ENCODE measurements at regions of chr12 and their contacts with region 1.

Region 1: GRCh38 chr12:114668151-114668885 is 15.7 kb downstream of the TBX3 start:
- DNase-seq: peak; percentile 66 to 94
- H3K4me3 ChIP-seq: no peak overlapping the region
- CTCF ChIP-seq: peak in 1 of 3 donors; percentile 38
- POLR2A ChIP-seq: no peak

Region 2: DNA sequence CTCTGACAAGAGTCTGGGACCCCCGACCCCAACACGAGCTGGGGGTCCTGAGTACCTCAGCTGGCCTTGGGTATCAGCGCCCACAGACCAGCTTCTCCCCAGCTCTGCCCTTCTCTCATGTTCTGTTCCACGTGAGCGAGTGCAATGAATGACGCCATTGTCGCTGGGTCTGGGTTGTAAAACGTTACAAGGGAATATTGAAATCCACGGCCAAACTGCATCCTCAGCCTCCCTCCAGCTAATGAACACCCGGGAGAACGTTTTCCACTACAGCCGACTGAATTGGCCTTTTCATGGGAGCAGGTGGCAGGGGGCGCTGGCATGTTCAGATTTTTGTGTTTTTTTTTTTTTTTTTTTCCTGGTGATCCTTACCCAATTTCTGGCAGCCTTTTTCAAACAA is 297.1 kb before region 1 on chr12:
- intact Hi-C with region 1: no loop called
- DNase-seq: no peak
- H3K4me3 ChIP-seq: no peak overlapping the region
- CTCF ChIP-seq: no peak
- POLR2A ChIP-seq: no peak

Region 3: DNA sequence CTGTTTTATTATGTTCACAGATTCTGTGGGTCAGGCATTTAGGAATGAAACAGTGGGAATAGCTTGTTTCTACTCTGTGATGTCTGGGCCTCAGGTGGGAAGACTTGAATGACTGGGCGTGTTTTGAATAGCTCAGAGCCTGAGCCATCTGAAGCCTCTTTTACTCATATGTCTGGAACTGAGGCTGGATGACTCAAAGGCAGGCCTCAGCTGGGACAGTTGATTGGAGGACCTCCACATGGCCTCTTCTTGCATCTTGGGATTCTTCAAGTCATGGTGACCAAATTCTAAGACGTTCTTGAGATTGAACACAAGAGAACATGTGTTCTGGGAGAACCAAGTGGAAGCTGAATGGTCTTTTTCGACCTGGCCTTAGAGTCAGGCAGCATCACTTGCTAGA is 61.4 kb after region 1 on chr12:
- intact Hi-C with region 1: no loop called
- DNase-seq: no peak
- H3K4me3 ChIP-seq: no peak overlapping the region
- CTCF ChIP-seq: no peak
- POLR2A ChIP-seq: no peak

Region 4: DNA sequence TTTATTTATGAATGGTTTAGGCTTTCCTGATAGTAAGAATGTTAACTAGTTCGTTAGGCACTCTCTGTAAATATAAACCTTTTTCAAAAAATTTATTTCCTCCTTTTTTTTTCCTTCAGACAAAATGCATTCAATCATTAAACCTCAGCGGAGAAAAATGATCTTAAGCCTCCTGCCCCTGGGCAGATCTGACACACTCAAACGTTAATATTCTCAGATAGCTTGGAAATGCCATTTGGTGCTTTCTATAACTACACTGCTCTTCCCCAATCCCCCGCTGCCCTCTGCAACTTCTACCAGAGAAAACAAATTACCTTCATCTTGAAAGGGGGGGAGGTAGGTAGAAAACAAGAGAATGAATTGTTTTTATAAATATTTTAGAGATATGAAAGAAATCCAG is 1088.0 kb after region 1 on chr12:
- intact Hi-C with region 1: loop called (anchors 5 kb)
- DNase-seq: no peak
- H3K4me3 ChIP-seq: no peak overlapping the region
- CTCF ChIP-seq: no peak
- POLR2A ChIP-seq: no peak

Region 5: GRCh38 chr12:115916910-115917668 is 1248.8 kb after region 1 on chr12:
- intact Hi-C with region 1: loop called (anchors 5 kb)
- DNase-seq: peak; percentile 41 to 93
- H3K4me3 ChIP-seq: no peak overlapping the region
- CTCF ChIP-seq: peak in 1 of 3 donors; percentile 84
- POLR2A ChIP-seq: no peak

Measured in lower leg skin (tissue), 4 donors.